H1 (cell line): ENCODE measurements at regions of chr14 and their contacts with region 1.

Region 1: GRCh38 chr14:24171422-24172260 is at the start of gene REC8:
- DNase-seq: peak; percentile 97
- H3K4me3 ChIP-seq: peak within 1 kb of the TSS; percentile 62 to 77 (median 71)
- H3K27ac ChIP-seq: no peak within 1 kb of the TSS
- H3K4me1 ChIP-seq: peaks cover 0 to 9% (median 7%) of the 10 kb centered on the region in 4 experiments; a peak in 4 of 7 replicates
- H3K27me3 ChIP-seq: no peaks in the 10 kb centered on the region
- CTCF ChIP-seq: peak in 1 of 3 experiments; percentile 7; a peak in 1 of 4 replicates
- EP300 ChIP-seq: peak in 1 of 2 experiments; percentile 69; a peak in 1 of 3 replicates
- POLR2A ChIP-seq: peak in 1 of 2 experiments; percentile 44; a peak in 1 of 3 replicates
- RAD21 ChIP-seq: 0 out of 4 replicates have a peak, but pooled peaks of 1 of the 2 experiments have one; percentile 6
- total RNA-seq, gene REC8: 25.8 and 28.5 TPM in 2 replicates

Region 2: DNA sequence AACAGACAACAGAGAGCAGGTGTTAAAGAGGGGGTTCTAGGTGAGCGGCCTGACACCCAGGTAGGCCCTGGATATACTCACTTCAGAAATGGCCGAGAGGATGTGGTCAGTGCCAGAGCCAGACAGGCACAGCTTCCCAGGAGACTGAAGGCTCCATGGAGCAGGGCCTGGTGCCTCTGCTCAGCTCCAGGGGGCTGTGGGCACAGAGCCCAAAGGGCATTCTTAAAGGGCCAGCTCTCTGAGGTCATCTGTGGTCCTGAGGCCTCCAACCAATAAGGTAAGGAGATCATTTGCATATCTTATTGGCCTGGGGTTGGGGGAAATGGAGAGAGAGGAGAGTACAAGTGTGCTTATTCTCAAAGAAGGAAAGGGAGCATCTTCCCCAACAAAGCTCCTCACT is 87.2 kb before region 1 on chr14:
- CTCF ChIA-PET with region 1: no interaction called
- POLR2A ChIA-PET with region 1: no interaction called
- DNase-seq: no peak
- H3K4me3 ChIP-seq: no peak overlapping the region
- H3K27ac ChIP-seq: no peak overlapping the region
- H3K4me1 ChIP-seq: peaks cover 0 to 17% (median 12%) of the 10 kb centered on the region in 4 experiments; a peak in 6 of 7 replicates
- H3K27me3 ChIP-seq: peaks cover 0 to 10% (median 7%) of the 10 kb centered on the region in 4 experiments; a peak in 5 of 7 replicates
- CTCF ChIP-seq: no peak
- EP300 ChIP-seq: no peak
- POLR2A ChIP-seq: no peak
- RAD21 ChIP-seq: no peak

Region 3: GRCh38 chr14:24188251-24189058 is 16.8 kb after region 1 on chr14 and contains the start of gene IPO4:
- CTCF ChIA-PET with region 1: interaction called, 4 read pairs
- POLR2A ChIA-PET with region 1: interaction called, 158 read pairs
- DNase-seq: peak; percentile 93 to 95
- H3K4me3 ChIP-seq: peak within 1 kb of the TSS; percentile 75 to 91 (median 87)
- H3K27ac ChIP-seq: peak within 1 kb of the TSS; percentile 58; the same call in 1 of the 2 replicates
- H3K4me1 ChIP-seq: peaks cover 0 to 7% (median 4%) of the 10 kb centered on the region in 4 experiments; a peak in 6 of 7 replicates
- H3K27me3 ChIP-seq: no peaks in the 10 kb centered on the region
- CTCF ChIP-seq: no peak; a peak in 1 of 4 replicates
- EP300 ChIP-seq: peak in 1 of 2 experiments; percentile 93; a peak in 1 of 3 replicates
- POLR2A ChIP-seq: peak in 1 of 2 experiments; percentile 91; a peak in 2 of 3 replicates
- RAD21 ChIP-seq: peak; percentile 24 to 37; a peak in 2 of 4 replicates
- total RNA-seq, gene IPO4: 108 and 109 TPM in 2 replicates